Ovary (tissue), 10 donors: ENCODE measurements at regions of chr1 and their contacts with region 1.

Region 1: GRCh38 chr1:184379111-184379946 is 7.5 kb upstream of the C1orf21 start:
- DNase-seq: no peak
- H3K4me3 ChIP-seq: no peak overlapping the region
- H3K27ac ChIP-seq: no peak overlapping the region
- H3K4me1 ChIP-seq: no peaks in the 10 kb centered on the region
- H3K27me3 ChIP-seq: no peaks in the 10 kb centered on the region
- CTCF ChIP-seq: no peak
- EP300 ChIP-seq: no peak
- POLR2A ChIP-seq: no peak

Region 2: DNA sequence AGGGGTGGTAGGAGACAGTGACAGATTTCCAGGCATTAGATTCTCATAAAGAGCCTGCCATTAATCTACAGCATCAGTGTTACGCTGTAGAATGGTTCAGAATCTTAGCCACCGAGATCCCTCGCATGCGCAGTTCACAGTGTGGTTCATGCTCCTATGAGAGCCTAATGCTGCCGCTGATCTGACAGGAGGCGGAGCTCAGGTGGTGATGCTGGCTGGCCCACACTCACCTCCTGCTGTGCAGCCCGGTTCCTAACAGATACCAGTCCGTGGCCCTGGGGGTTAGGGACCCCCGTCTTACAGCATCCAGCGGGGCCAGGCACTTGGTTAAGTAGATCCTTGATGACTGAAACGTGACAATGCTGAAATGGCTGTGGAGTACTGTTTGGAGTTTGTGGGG is 156.1 kb before region 1 on chr1:
- intact Hi-C with region 1: no loop called
- DNase-seq: no peak
- H3K4me3 ChIP-seq: no peak overlapping the region
- H3K27ac ChIP-seq: no peak overlapping the region
- H3K4me1 ChIP-seq: no peaks in the 10 kb centered on the region
- H3K27me3 ChIP-seq: no peaks in the 10 kb centered on the region
- CTCF ChIP-seq: no peak
- EP300 ChIP-seq: no peak
- POLR2A ChIP-seq: no peak

Region 3: DNA sequence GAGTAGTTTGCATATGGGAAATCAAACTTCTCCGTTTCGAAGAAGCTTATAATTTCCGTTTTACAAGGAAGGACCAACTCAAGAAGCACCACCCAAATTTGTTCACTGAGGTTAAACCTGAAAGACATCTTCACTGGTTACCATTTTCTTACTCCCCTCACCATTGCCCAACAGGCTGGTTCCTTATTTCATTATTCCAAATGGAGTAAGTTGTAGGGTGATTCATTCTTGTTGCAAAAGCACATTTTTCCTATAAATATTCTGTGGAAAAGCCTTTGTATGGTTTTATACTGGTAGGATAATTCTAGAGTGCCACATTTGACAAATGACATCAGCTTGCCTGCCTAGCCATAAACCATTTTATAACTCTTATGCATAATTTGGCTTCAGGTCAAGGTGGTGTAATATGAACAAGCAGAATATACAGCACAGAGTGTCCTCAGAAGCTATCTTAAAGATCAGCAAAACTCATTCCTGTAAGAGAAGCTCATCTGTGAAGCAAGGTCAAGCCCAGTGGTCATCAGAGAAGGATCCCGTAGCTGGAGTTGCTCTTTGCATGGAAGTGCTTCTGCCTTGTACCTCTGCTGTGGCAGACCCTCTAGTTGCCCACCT is 16.6 kb before region 1 on chr1:
- intact Hi-C with region 1: loop called in 1 of 4 experiments (anchors 1 kb)
- DNase-seq: no peak
- H3K4me3 ChIP-seq: no peak overlapping the region
- H3K27ac ChIP-seq: no peak overlapping the region
- H3K4me1 ChIP-seq: no peaks in the 10 kb centered on the region
- H3K27me3 ChIP-seq: no peaks in the 10 kb centered on the region
- CTCF ChIP-seq: no peak
- EP300 ChIP-seq: no peak
- POLR2A ChIP-seq: no peak

Region 4: GRCh38 chr1:184443624-184444023 is 64.3 kb after region 1 on chr1:
- intact Hi-C with region 1: no loop called
- DNase-seq: no peak
- H3K4me3 ChIP-seq: no peak overlapping the region
- H3K27ac ChIP-seq: no peak overlapping the region
- H3K4me1 ChIP-seq: no peaks in the 10 kb centered on the region
- H3K27me3 ChIP-seq: no peaks in the 10 kb centered on the region
- CTCF ChIP-seq: no peak
- EP300 ChIP-seq: no peak
- POLR2A ChIP-seq: no peak